PC-3 (cell line): ENCODE measurements at regions of chr3 and their contacts with region 1.

Region 1: DNA sequence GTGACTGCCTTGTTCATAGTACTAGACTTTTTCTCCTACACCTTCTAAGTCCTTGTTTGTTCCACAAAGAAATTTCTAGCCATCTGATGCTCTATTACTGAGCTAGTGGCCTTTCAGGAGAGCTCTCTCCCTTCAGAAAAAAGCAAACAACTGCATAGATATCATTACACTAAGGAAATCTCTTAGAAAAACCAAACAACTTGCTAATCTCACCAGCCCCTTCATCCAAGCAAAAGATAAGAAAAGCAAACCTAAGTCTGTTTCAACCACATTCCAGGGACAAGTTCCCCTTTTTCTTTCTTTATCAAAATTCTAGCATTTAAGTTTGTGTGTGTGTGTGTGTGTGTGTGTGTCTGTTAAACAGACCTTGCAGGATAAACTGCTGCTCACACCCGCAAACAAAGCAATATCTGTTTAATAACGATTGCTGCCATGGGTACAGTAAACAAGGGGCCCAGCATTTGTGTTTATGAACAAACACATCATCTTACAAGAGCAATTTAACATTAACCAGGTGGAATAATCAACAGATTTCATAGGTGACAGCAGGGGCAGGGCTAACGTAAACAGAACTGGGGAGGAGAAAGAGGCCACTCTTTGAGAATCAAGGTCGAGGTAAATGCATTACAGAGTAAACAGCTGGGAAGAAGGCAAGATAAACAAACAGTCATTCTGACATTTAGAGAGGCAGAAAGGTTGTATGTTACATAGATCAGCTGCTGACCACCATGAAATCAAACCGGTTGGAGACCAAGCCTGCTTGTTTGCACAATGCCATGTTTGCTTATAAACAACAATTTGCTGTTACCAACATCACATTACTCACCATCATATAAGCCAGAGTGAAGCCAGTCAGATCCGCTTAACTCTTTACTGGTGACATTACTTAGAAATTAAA is 375.1 kb downstream of the FOXP1 start:
- DNase-seq: peak; percentile 87
- ATAC-seq: peak; percentile 79
- H3K4me3 ChIP-seq: no peak overlapping the region
- H3K27ac ChIP-seq: peak overlapping the region; percentile 64
- H3K4me1 ChIP-seq: peaks cover 38% of the 10 kb centered on the region
- H3K27me3 ChIP-seq: no peaks in the 10 kb centered on the region
- CTCF ChIP-seq: no peak

Region 2: GRCh38 chr3:71087143-71088018 is 121.1 kb before region 1 on chr3:
- CTCF ChIA-PET with region 1: no interaction called
- POLR2A ChIA-PET with region 1: no interaction called
- intact Hi-C with region 1: loop called (anchors 5 kb)
- DNase-seq: peak; percentile 95
- ATAC-seq: peak; percentile 86
- H3K4me3 ChIP-seq: no peak overlapping the region
- H3K27ac ChIP-seq: peak overlapping the region; percentile 71
- H3K4me1 ChIP-seq: peaks cover 38% of the 10 kb centered on the region
- H3K27me3 ChIP-seq: no peaks in the 10 kb centered on the region
- CTCF ChIP-seq: no peak

Region 3: DNA sequence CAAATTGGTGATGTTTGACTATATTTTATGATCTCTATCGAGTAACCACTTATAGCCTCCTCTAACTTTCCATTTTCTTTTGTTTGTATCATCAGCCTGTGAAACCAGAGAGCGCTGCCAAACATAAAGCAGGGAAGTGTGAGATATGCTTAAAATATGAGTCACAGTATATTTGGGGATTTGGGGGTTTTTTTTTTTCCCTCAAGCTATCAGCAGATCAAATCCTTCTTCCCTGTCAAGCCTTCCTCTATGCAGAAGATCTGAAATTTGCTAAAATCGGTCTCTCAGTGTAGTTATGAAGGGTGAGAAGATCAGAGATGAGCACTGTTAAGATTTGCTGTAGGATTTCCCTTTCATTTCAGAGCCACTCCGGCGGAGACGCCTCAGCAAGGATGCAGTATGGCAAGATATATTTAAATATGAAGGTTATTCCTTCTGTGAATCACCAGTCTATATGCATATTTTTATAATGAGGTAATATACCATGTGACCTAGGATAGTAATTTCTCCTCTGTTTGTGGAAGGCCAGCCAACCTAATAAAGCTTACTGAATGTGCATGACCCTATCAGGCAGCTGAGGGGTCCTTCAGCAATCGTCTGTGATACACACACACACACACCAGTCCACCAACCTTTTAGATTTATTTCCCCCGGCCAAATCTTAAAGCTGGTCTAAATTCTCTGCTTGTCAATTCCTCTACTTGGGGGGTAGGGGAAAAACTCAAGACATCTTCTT is 99.1 kb before region 1 on chr3:
- CTCF ChIA-PET with region 1: no interaction called
- POLR2A ChIA-PET with region 1: no interaction called
- intact Hi-C with region 1: loop called (anchors 5 kb)
- DNase-seq: peak; percentile 86
- ATAC-seq: peak; percentile 56
- H3K4me3 ChIP-seq: peak overlapping the region; percentile 63
- H3K27ac ChIP-seq: peak overlapping the region; percentile 92
- H3K4me1 ChIP-seq: peaks cover 56% of the 10 kb centered on the region
- H3K27me3 ChIP-seq: no peaks in the 10 kb centered on the region
- CTCF ChIP-seq: no peak

Region 4: GRCh38 chr3:71130471-71131374 is 77.7 kb before region 1 on chr3:
- CTCF ChIA-PET with region 1: no interaction called
- POLR2A ChIA-PET with region 1: no interaction called
- intact Hi-C with region 1: loop called (anchors 5 kb)
- DNase-seq: peak; percentile 76
- ATAC-seq: peak; percentile 79
- H3K4me3 ChIP-seq: peak overlapping the region; percentile 71
- H3K27ac ChIP-seq: peak overlapping the region; percentile 8
- H3K4me1 ChIP-seq: peaks cover 32% of the 10 kb centered on the region
- H3K27me3 ChIP-seq: no peaks in the 10 kb centered on the region
- CTCF ChIP-seq: no peak

Region 5: GRCh38 chr3:71180524-71180923 is 27.9 kb before region 1 on chr3:
- CTCF ChIA-PET with region 1: no interaction called
- POLR2A ChIA-PET with region 1: no interaction called
- intact Hi-C with region 1: no loop called
- DNase-seq: no peak
- ATAC-seq: no peak
- H3K4me3 ChIP-seq: no peak overlapping the region
- H3K27ac ChIP-seq: no peak overlapping the region
- H3K4me1 ChIP-seq: no peaks in the 10 kb centered on the region
- H3K27me3 ChIP-seq: no peaks in the 10 kb centered on the region
- CTCF ChIP-seq: no peak

Region 6: DNA sequence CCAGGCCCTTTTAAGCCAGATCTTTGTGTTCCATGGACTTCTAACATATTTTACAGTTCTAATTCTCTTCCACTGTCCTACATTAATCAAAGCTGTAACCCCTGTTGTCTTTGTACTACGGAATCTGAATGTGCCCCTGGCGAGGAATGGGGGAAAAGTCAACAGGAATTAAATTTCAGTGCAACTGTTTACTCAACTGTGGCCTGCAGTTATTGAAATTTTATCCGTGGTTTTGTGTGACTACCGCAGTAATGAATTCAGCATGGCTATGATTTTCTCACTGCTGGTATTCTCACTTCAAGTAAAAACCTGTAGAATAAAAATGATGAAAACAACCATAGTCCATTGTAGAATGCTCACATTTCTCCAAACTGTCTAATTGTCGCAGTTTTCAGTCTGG is 13.0 kb before region 1 on chr3:
- CTCF ChIA-PET with region 1: no interaction called
- POLR2A ChIA-PET with region 1: no interaction called
- intact Hi-C with region 1: loop called (anchors 1 kb)
- DNase-seq: peak; percentile 89
- ATAC-seq: peak; percentile 95
- H3K4me3 ChIP-seq: no peak overlapping the region
- H3K27ac ChIP-seq: peak overlapping the region; percentile 59
- H3K4me1 ChIP-seq: peaks cover 35% of the 10 kb centered on the region
- H3K27me3 ChIP-seq: no peaks in the 10 kb centered on the region
- CTCF ChIP-seq: no peak

Region 7: GRCh38 chr3:71258116-71258515 is 49.7 kb after region 1 on chr3:
- CTCF ChIA-PET with region 1: no interaction called
- POLR2A ChIA-PET with region 1: no interaction called
- intact Hi-C with region 1: loop called (anchors 2 kb)
- DNase-seq: peak; percentile 86
- ATAC-seq: peak; percentile 88
- H3K4me3 ChIP-seq: no peak overlapping the region
- H3K27ac ChIP-seq: peak overlapping the region; percentile 47
- H3K4me1 ChIP-seq: peaks cover 32% of the 10 kb centered on the region
- H3K27me3 ChIP-seq: no peaks in the 10 kb centered on the region
- CTCF ChIP-seq: no peak

Region 8: DNA sequence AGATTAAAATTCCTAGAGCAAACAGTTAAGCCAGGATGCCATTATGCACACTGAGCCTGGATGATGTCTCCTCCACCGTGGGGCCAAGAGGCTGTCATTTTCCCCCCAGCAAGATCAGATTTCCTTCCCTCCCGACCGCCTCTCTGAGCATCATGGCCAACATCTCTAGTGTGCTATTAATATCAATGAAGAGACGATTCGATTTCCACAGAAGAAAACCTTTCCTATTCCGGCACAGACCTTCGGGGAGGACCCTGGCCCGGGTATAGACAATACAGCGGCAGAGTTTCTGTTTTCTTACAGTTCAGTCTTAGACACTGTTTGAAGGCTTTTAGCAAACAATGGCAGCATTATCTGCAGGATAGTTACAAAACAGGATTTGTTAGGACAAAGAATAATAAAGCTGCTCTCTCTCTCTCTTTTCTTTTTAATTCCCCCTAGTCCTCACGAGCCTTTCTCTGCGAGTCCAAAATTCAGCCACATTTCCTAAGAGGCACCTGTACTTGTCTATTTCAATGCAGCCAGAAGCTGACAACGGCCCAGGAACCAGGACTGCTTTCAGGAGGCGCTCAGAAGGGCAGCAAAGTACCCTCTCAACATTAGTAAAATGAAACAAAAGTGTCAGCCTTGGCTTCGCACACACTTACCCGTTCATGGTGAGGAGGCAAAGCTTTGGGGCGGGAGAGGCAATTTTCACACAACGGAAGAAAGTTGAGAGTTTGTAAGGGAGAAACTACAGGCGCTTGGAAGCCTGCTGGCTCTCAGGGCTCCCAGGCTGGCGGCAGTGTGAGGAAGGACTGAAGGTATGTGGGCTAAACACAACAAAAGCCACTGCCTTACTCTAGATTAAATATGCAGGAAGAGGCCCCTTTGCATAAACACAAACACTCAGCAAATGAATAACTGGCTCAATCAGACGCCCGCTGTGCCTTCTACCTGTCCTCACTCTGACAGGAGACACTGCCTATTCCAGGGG is 97.1 kb after region 1 on chr3:
- CTCF ChIA-PET with region 1: interaction called, 4 read pairs
- POLR2A ChIA-PET with region 1: no interaction called
- intact Hi-C with region 1: loop called (anchors 2 kb)
- DNase-seq: peak; percentile 38
- ATAC-seq: peak; percentile 65
- H3K4me3 ChIP-seq: peak overlapping the region; percentile 57
- H3K27ac ChIP-seq: no peak overlapping the region
- H3K4me1 ChIP-seq: peaks cover 24% of the 10 kb centered on the region
- H3K27me3 ChIP-seq: no peaks in the 10 kb centered on the region
- CTCF ChIP-seq: no peak